Esophagus squamous epithelium (tissue), 5 donors: ENCODE measurements at regions of chr12 and their contacts with region 1.

Region 1: GRCh38 chr12:58529897-58530741 is 390.2 kb downstream of the LRIG3 start:
- DNase-seq: no peak
- H3K4me3 ChIP-seq: no peak overlapping the region
- H3K27ac ChIP-seq: peak overlapping the region in 3 of 4 donors; percentile 0 to 54 (median 49)
- H3K4me1 ChIP-seq: peaks cover 0 to 40% (median 0%) of the 10 kb centered on the region in 3 donors
- H3K27me3 ChIP-seq: no peaks in the 10 kb centered on the region
- CTCF ChIP-seq: no peak
- POLR2A ChIP-seq: no peak

Region 2: DNA sequence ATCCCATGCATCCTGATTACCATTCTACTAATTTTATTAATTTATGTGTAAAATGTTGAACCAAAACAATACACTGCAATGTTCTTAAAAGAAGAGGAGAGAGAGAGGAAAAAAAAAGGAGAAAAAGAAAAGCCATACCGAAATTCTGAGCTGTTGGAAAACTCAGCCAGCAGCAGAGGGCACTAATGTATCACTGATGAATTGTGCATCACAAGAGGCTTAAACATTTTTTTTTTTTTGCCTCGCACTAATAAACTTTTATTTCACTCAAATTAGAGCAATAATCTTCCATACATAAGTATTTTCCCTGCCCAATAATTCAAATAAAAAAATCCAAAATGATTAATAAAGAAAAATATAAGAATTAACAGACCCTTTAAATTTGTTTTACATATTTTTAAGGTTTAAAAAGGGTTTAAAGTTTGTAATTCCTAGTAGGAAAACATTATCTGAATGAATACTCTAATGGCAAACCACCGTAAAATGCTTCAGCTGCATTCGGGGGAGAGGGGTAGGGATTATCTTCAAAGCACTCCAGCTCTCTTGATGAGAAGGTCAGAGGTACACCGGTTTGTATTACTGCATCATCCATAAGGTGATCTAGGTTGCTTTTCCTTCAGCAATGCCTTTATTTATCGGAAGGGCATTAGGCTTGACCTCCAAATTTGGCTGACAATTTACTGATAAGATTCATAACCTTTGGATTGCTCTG is 546.8 kb before region 1 on chr12:
- intact Hi-C with region 1: loop called (anchors 10 kb)
- DNase-seq: no peak
- H3K4me3 ChIP-seq: no peak overlapping the region
- H3K27ac ChIP-seq: no peak overlapping the region
- H3K4me1 ChIP-seq: peaks cover 0 to 13% (median 5%) of the 10 kb centered on the region in 3 donors
- H3K27me3 ChIP-seq: no peaks in the 10 kb centered on the region
- CTCF ChIP-seq: peak; percentile 29 to 79 (median 64)
- POLR2A ChIP-seq: no peak

Region 3: DNA sequence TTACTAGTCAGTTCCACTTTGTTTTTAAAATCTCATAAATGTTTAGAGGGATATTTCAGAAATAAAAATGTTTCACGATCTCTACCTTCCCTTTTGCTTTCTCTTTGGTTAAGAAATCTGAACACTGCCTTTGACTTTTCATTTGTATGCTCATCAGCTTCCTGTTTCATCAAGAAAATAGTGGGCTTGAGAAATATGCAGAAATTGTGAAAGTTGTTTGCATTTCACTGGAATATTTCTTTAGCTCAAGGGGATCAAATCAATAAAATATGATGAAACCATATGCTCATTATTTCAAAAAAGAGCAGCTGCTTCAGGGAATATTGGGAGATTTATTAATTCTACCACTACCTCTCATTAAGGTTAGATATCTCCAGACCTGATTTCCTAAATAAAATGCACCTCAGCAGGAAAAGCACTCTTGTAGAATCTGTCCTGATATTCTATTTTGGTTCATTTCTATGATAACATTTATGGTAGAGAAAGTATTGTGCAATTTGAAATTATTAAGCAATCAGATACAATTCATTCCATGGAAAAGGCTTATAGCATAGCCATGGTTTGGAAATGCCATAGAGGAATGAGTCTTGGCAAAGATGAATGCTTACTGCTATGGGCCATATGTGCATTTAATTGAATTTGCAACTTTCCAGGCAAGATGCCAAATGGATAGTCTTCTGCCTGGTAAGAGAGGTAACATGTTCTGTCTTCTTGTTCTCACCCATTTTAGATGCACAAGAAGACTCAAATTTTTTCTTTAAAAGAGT is 853.1 kb after region 1 on chr12:
- intact Hi-C with region 1: no loop called
- DNase-seq: no peak
- H3K4me3 ChIP-seq: no peak overlapping the region
- H3K27ac ChIP-seq: no peak overlapping the region
- H3K4me1 ChIP-seq: no peaks in the 10 kb centered on the region
- H3K27me3 ChIP-seq: no peaks in the 10 kb centered on the region
- CTCF ChIP-seq: no peak
- POLR2A ChIP-seq: no peak